ENCODE measurements at regions of chr4 and their contacts with region 1.

Region 1: DNA sequence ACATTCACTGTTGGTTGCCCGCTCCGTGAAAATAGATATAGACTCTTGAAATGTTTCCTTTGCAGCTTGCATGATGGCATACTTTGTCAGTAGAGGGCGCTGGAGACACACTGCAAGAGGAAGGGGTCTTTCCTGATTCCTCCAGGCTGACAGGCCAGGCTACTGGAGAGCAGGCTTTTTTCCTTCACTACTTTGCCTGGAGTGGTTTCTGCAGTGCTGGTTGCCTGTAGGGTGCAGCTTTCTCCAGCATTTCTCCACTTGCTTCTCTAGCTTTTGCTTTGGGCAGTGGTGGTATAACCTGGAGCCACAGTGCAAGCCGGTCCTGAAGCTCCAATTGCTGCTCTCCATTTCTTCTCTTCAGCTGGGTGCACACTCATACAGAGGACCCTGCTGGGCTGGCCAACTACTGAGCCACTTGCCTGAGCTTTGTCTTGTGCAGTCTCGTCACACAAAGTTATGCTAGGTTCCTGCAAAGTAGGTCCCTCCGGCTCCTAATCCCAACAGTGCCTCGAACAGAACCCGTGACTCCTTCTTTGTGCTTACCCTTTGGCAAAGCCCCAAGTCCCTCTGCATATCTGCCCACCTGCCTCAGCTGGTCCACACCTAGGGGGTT is 46.3 kb downstream of the RASSF6 start:
- DNase-seq: peak; percentile 45
- CTCF ChIP-seq: peak; percentile 86

Region 2: DNA sequence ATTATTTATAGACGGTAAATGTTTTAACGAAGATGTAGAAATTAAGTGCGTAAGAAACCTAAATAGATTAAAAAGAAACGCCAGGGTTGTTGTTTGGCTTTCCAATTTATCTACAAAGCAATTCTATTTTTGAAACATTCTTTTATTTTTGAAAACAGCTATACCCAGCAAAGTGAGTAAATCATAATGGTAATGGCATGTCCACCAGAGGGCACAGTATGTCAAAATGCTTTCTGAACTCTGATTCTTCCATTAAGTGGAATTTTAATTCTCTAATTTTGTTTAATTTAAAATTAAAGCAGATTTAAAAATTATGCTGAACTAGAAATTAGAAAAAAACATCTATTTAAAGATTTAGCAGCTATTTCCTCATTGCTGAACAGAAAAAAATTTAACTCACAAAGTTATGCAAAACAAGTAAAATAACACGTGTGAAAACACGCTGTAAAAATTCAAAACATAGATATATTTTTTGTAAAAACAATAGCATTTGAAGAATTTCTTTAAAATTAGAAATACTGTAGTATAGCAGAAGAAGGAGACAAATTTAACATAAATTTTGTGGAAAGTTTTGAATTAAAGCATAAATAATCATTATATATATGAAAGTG is 19.8 kb after region 1 on chr4:
- CTCF ChIA-PET with region 1: interaction called, 13 read pairs
- POLR2A ChIA-PET with region 1: no interaction called
- DNase-seq: no peak
- CTCF ChIP-seq: peak; percentile 33

Measured in GM10248 (cell line).